ENCODE measurements at regions of chr4 and their contacts with region 1.

Region 1: GRCh38 chr4:99949034-99949998 is 759 bp downstream of the H2AZ1 start:
- DNase-seq: peak; percentile 96
- ATAC-seq: peak; percentile 18
- H3K4me3 Mint-ChIP-seq: no peak overlapping the region
- H3K27ac Mint-ChIP-seq: no peak overlapping the region
- H3K4me1 Mint-ChIP-seq: peaks cover 32% of the 10 kb centered on the region
- H3K27me3 Mint-ChIP-seq: no peaks in the 10 kb centered on the region

Region 2: GRCh38 chr4:99563310-99564186 is 385.8 kb before region 1 on chr4 and contains the start of gene TRMT10A:
- CTCF ChIA-PET with region 1: interaction called, 14 read pairs
- DNase-seq: peak; percentile 97
- ATAC-seq: peak; percentile 93
- H3K4me3 Mint-ChIP-seq: peak within 1 kb of the TSS; percentile 92
- H3K27ac Mint-ChIP-seq: peak within 1 kb of the TSS; percentile 98
- H3K4me1 Mint-ChIP-seq: peaks cover 25% of the 10 kb centered on the region
- H3K27me3 Mint-ChIP-seq: peaks cover 15% of the 10 kb centered on the region
- total RNA-seq, gene TRMT10A: 7.9 to 8.6 TPM

Region 3: DNA sequence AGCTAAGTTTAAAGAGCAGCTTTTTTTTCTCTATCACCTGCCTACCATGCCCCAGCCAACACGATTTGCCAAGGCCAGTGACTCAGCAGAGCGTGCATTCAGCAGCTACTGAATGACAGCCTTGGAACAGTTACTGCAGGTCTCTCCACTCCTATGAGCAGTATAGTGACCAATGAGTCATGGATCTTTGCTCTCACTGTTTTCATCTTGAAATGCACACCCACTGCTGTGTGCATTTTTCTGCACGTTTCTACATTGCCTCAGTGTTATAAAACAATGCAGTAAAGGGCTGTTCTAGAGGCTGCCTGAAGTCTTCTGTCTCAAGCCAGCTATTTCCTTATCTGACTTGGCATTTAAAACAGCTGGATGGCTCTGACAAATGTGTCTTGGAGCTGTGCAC is 225.7 kb before region 1 on chr4:
- CTCF ChIA-PET with region 1: no interaction called
- DNase-seq: no peak
- ATAC-seq: no peak
- H3K4me3 Mint-ChIP-seq: no peak overlapping the region
- H3K27ac Mint-ChIP-seq: no peak overlapping the region
- H3K4me1 Mint-ChIP-seq: no peaks in the 10 kb centered on the region
- H3K27me3 Mint-ChIP-seq: peaks cover 11% of the 10 kb centered on the region

Region 4: DNA sequence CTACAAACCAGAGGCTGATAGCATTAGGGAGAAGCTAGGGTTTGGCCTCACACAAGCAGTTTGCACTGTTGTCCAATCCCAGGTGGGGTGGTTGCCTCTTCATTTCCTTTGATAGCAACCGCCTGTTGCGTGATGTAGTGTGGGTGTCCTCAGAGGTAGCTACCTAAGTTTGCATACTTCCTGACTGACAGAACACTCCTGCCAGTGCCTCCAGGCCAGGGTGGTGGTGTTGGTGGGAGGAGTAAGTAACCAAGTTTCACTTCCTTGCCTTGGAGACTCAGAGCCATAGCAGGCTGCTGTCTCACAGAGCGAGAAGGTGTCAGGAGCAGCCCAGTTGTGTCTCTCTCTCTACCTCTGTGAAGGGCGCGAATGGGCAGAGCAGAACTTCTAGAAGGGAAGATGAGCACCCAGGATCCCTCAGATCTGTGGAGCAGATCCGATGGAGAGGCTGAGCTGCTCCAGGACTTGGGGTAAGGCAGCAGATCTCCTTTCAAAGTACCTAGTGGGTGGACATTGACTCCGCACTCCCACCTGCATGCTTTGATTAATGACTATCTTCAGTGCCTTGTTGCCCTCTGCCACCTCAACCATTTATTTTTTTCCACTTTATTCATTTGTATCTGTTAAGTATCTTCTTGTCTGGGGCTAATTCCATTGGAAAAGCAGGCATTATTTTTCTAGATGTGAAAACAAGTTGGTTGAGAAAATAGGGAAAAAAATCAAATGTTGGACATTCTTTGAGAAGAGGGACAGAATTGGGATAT is 132.6 kb before region 1 on chr4 and contains the start of gene DAPP1:
- CTCF ChIA-PET with region 1: interaction called, 42 read pairs
- DNase-seq: peak; percentile 93
- ATAC-seq: peak; percentile 97
- H3K4me3 Mint-ChIP-seq: peak within 1 kb of the TSS; percentile 77
- H3K27ac Mint-ChIP-seq: peak within 1 kb of the TSS; percentile 91
- H3K4me1 Mint-ChIP-seq: peaks cover 75% of the 10 kb centered on the region
- H3K27me3 Mint-ChIP-seq: no peaks in the 10 kb centered on the region
- total RNA-seq, gene DAPP1: 24.6 to 25.3 TPM

Region 5: GRCh38 chr4:99894161-99894997 is 54.9 kb before region 1 on chr4 and contains the start of gene LAMTOR3:
- CTCF ChIA-PET with region 1: interaction called, 13 read pairs
- DNase-seq: peak; percentile 94
- ATAC-seq: peak; percentile 99
- H3K4me3 Mint-ChIP-seq: peak within 1 kb of the TSS; percentile 88
- H3K27ac Mint-ChIP-seq: peak within 1 kb of the TSS; percentile 93
- H3K4me1 Mint-ChIP-seq: peaks cover 39% of the 10 kb centered on the region
- H3K27me3 Mint-ChIP-seq: no peaks in the 10 kb centered on the region
- total RNA-seq, gene LAMTOR3: 20.6 to 25.3 TPM

Region 6: DNA sequence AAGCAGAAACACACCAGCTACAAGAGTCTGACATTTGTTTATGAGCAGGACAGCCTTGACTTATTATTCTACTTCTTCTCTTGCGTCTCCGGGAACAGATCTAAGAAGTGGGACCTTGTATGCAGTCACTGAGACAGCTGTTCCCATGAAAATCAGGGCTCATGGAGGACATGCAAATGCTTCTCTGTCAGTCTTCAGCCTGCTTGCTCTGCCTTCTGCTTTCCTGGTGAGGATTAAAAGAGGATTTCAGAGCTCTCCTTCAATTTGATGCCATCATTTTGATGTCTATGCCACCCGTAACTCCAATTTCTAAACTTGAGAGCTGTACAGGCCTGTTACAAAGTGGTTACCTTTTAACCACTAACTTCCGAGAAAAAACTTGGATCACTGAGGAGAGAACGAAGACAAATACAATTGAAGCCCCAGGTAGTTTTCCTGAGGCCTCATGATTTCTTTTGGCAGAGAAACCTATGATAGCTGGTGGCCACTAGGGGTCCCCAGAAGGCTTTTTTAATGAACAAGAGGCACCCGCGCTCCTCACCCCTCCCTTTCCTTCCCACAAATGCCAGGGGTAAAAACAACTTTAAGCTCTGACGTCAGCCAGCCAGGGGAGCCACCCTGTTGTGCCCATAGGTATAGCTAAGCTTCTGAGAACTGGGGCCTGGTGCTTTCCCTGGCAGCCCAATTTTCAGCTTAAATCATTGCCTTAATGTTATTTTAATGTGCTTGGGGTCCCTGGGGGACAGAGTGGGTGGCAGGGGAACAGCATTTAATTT is 144.0 kb after region 1 on chr4:
- CTCF ChIA-PET with region 1: interaction called, 10 read pairs
- DNase-seq: peak; percentile 90
- ATAC-seq: peak; percentile 96
- H3K4me3 Mint-ChIP-seq: no peak overlapping the region
- H3K27ac Mint-ChIP-seq: peak overlapping the region; percentile 66
- H3K4me1 Mint-ChIP-seq: peaks cover 36% of the 10 kb centered on the region
- H3K27me3 Mint-ChIP-seq: peaks cover 4% of the 10 kb centered on the region

Region 7: GRCh38 chr4:100117750-100118149 is 168.4 kb after region 1 on chr4:
- CTCF ChIA-PET with region 1: no interaction called
- DNase-seq: no peak
- ATAC-seq: no peak
- H3K4me3 Mint-ChIP-seq: no peak overlapping the region
- H3K27ac Mint-ChIP-seq: no peak overlapping the region
- H3K4me1 Mint-ChIP-seq: peaks cover 7% of the 10 kb centered on the region
- H3K27me3 Mint-ChIP-seq: peaks cover 13% of the 10 kb centered on the region